BJ (cell line): ENCODE measurements at regions of chr17 and their contacts with region 1.

Region 1: DNA sequence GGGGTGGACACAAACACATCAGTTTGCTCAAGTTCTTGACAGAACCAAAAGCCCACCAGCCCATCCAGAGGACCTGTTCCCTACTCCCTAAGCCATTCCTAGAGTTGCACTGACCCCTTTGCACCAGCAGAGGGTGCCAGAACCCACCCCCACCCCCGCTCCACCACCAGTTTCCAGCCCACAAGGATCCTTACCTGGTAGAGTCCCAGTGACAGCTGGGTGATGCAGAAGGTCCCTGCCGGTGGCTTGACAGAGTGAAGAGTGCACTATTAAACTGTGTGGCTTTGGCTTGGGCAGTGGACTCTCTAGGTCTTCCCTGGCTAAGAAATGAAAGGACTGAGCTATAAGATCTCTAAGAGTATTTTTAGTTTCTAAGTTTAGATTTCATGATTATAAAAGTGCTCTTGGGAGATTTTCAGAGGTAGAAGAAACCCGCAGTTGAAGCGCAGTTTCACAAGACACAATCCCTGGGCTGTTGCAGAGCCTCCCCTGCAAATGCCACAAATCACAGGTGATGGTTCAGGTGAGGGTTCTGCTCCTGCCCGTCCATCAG is 73.3 kb upstream of the MTMR4 start:
- DNase-seq: no peak
- H3K4me3 ChIP-seq: no peak overlapping the region
- H3K27me3 ChIP-seq: no peaks in the 10 kb centered on the region
- CTCF ChIP-seq: peak; percentile 99

Region 2: GRCh38 chr17:58577642-58578091 is 10.1 kb before region 1 on chr17:
- CTCF ChIA-PET with region 1: interaction called, 36 read pairs
- POLR2A ChIA-PET with region 1: no interaction called
- DNase-seq: no peak
- H3K4me3 ChIP-seq: no peak overlapping the region
- H3K27me3 ChIP-seq: no peaks in the 10 kb centered on the region; the same call in 1 of the 2 replicates
- CTCF ChIP-seq: peak; percentile 79

Region 3: GRCh38 chr17:58605470-58605869 is 17.7 kb after region 1 on chr17:
- CTCF ChIA-PET with region 1: interaction called, 10 read pairs
- POLR2A ChIA-PET with region 1: no interaction called
- DNase-seq: no peak
- H3K4me3 ChIP-seq: no peak overlapping the region
- H3K27me3 ChIP-seq: no peaks in the 10 kb centered on the region
- CTCF ChIP-seq: no peak